Mammary epithelial cell (primary cell): ENCODE measurements at regions of chr1 and their contacts with region 1.

Region 1: DNA sequence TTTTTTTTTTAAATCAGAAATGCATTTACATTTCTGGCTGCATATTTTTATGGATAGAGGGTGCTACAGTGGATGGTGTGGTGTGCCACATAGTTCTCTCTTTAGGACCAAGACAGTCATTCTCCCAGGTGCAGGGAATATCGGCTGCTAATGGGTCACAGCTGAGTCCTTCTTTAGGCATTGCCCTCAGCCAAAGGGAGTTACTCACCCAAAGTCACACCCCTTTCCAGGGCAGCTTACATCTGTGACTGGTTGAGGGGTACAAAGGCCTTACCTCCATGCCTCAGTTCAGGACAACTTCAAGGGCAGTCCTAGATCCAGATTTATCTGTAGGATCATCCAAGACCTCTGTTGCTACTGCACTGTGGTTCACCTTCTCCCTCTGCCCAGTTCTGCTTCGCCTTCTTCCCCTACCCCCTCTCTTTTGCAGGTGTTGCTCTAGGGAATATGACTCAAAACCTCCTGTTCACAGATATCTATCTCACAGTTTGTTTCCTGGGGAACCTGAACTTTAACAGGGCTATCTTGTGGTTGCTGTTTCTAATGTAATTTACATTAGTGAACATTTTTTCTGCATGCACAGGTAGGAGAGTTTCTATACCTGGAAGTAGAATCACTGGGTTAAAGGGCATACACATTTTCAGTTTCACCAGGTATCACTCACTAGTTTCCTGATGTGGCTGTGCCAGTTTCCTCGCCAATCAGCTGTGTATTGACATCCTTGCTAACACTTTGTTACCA is 413.9 kb downstream of the RPS6KC1 start:
- DNase-seq: peak; percentile 76
- H3K4me3 ChIP-seq: no peak overlapping the region
- H3K27ac ChIP-seq: no peak overlapping the region
- H3K4me1 ChIP-seq: peaks cover 5% of the 10 kb centered on the region
- H3K27me3 ChIP-seq: no peaks in the 10 kb centered on the region
- CTCF ChIP-seq: no peak

Region 2: GRCh38 chr1:213443415-213443814 is 21.5 kb before region 1 on chr1:
- CTCF ChIA-PET with region 1: no interaction called
- dilution Hi-C with region 1: loop called (anchors 5 kb)
- in situ Hi-C with region 1: no loop called
- intact Hi-C with region 1: loop called (anchors 1 kb)
- DNase-seq: peak; percentile 81
- H3K4me3 ChIP-seq: no peak overlapping the region
- H3K27ac ChIP-seq: no peak overlapping the region
- H3K4me1 ChIP-seq: peaks cover 3% of the 10 kb centered on the region
- H3K27me3 ChIP-seq: peaks cover 19% of the 10 kb centered on the region
- CTCF ChIP-seq: no peak

Region 3: GRCh38 chr1:213585402-213585801 is 120.5 kb after region 1 on chr1:
- CTCF ChIA-PET with region 1: no interaction called
- dilution Hi-C with region 1: no loop called
- in situ Hi-C with region 1: no loop called
- intact Hi-C with region 1: no loop called
- DNase-seq: no peak
- H3K4me3 ChIP-seq: no peak overlapping the region
- H3K27ac ChIP-seq: no peak overlapping the region
- H3K4me1 ChIP-seq: no peaks in the 10 kb centered on the region
- H3K27me3 ChIP-seq: peaks cover 1% of the 10 kb centered on the region
- CTCF ChIP-seq: no peak